CD4-positive, alpha-beta T cell (primary cell): ENCODE measurements at regions of chr14 and their contacts with region 1.

Region 1: DNA sequence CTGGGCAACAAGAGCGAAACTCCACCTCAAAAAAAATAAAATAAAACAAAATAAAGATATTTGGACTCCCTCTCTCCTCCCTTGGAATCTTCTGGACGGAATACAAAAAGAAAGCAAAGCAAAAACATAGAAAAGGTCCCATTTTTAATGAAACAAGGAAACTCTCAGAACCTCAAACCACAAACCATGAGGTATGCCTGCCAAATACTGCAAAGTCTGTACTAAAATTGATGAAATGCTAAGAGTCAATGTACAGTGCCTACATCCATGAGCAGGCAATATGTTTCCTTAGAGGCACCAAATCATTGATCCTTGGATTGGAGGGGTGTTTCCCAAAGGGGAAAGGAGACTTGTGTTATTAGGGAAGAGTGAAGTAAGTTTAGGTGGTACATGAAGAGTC is 8.2 kb upstream of the RPS6KA5 start:
- DNase-seq: peak in 3 of 14 experiments; percentile 21 to 65 (median 36)
- ATAC-seq: peak; percentile 24
- H3K4me3 ChIP-seq: no peak overlapping the region
- H3K4me3 Mint-ChIP-seq: peak overlapping the region; percentile 83
- H3K27ac ChIP-seq: no peak overlapping the region
- H3K27ac Mint-ChIP-seq: peak overlapping the region; percentile 68
- H3K4me1 ChIP-seq: peaks cover 62% of the 10 kb centered on the region
- H3K4me1 Mint-ChIP-seq: peaks cover 67% of the 10 kb centered on the region
- H3K27me3 ChIP-seq: no peaks in the 10 kb centered on the region
- H3K27me3 Mint-ChIP-seq: no peaks in the 10 kb centered on the region
- CTCF ChIP-seq: no peak

Region 2: GRCh38 chr14:90409209-90409730 is 659.4 kb before region 1 on chr14:
- CTCF ChIA-PET with region 1: no interaction called
- POLR2A ChIA-PET with region 1: no interaction called
- intact Hi-C with region 1: no loop called
- DNase-seq: no peak
- ATAC-seq: no peak
- H3K4me3 ChIP-seq: no peak overlapping the region
- H3K4me3 Mint-ChIP-seq: no peak overlapping the region
- H3K27ac ChIP-seq: no peak overlapping the region
- H3K27ac Mint-ChIP-seq: peak overlapping the region; percentile 73
- H3K4me1 ChIP-seq: peaks cover 3% of the 10 kb centered on the region
- H3K4me1 Mint-ChIP-seq: peaks cover 38% of the 10 kb centered on the region
- H3K27me3 ChIP-seq: no peaks in the 10 kb centered on the region
- H3K27me3 Mint-ChIP-seq: no peaks in the 10 kb centered on the region
- CTCF ChIP-seq: no peak

Region 3: GRCh38 chr14:90693413-90693812 is 375.2 kb before region 1 on chr14:
- CTCF ChIA-PET with region 1: no interaction called
- POLR2A ChIA-PET with region 1: no interaction called
- intact Hi-C with region 1: no loop called
- DNase-seq: no peak
- ATAC-seq: no peak
- H3K4me3 ChIP-seq: no peak overlapping the region
- H3K4me3 Mint-ChIP-seq: no peak overlapping the region
- H3K27ac ChIP-seq: no peak overlapping the region
- H3K27ac Mint-ChIP-seq: no peak overlapping the region
- H3K4me1 ChIP-seq: peaks cover 6% of the 10 kb centered on the region
- H3K4me1 Mint-ChIP-seq: no peaks in the 10 kb centered on the region
- H3K27me3 ChIP-seq: no peaks in the 10 kb centered on the region
- H3K27me3 Mint-ChIP-seq: no peaks in the 10 kb centered on the region
- CTCF ChIP-seq: no peak

Region 4: GRCh38 chr14:91021991-91022621 is 46.5 kb before region 1 on chr14:
- CTCF ChIA-PET with region 1: no interaction called
- POLR2A ChIA-PET with region 1: no interaction called
- intact Hi-C with region 1: no loop called
- DNase-seq: peak in 1 of 14 experiments; percentile 39
- ATAC-seq: no peak
- H3K4me3 ChIP-seq: peak overlapping the region; percentile 53
- H3K4me3 Mint-ChIP-seq: peak overlapping the region; percentile 85
- H3K27ac ChIP-seq: peak overlapping the region; percentile 59 to 82
- H3K27ac Mint-ChIP-seq: peak overlapping the region; percentile 59
- H3K4me1 ChIP-seq: peaks cover 18% of the 10 kb centered on the region
- H3K4me1 Mint-ChIP-seq: peaks cover 74% of the 10 kb centered on the region
- H3K27me3 ChIP-seq: no peaks in the 10 kb centered on the region
- H3K27me3 Mint-ChIP-seq: no peaks in the 10 kb centered on the region
- CTCF ChIP-seq: no peak

Region 5: DNA sequence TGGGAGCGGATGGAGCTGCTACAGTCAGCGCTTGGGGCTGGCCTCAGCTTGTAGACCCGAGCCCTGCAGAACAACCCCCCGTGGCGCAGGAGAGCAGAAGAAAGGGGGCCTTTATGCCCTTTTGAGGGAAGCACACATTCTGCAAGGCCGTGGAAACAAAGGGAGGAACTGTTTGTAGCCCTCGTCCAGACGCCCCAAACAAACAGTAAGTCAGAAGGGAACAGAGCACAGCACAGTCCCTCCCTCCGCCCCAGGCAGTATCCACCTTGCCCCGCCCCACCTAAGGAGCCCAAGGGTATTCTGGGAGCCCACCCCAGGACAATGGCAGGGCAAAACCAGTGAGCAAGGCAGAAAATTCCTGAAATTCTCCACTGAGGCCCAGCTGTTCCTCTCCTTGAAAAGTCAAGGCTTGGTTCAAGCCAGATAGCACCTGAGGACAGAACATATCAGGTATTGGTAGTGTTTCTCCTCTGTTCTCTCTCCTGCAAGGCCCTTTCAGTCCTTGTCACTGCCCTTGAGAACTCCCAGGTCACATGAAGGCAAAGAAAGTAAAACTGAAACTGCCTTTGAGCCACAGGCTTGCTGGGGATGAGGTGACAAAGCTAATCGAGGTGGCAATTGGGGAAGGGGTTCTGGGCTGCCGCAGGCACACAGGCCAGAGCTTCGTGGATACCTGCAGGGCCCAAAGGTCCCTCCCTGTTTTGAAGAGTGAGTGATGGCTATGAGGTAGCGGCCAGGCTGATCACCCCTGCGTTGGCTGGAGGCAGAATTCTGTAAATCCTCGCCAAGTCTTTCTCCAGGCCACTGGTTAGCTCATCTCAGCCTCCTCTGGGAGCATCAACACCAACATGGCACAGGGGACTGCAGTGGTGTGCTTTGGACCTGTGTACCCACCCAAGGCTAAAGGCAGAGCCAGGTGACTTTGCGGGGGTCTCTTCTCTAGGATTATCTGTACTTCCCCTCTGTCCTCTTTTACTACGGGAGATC is 45.7 kb after region 1 on chr14:
- CTCF ChIA-PET with region 1: no interaction called
- POLR2A ChIA-PET with region 1: interaction called, 181 read pairs
- intact Hi-C with region 1: no loop called
- DNase-seq: peak; percentile 30 to 89 (median 54)
- ATAC-seq: peak; percentile 77
- H3K4me3 ChIP-seq: peak overlapping the region; percentile 62
- H3K4me3 Mint-ChIP-seq: peak overlapping the region; percentile 92
- H3K27ac ChIP-seq: peak overlapping the region; percentile 83 to 88
- H3K27ac Mint-ChIP-seq: peak overlapping the region; percentile 91
- H3K4me1 ChIP-seq: peaks cover 65% of the 10 kb centered on the region
- H3K4me1 Mint-ChIP-seq: peaks cover 74% of the 10 kb centered on the region
- H3K27me3 ChIP-seq: no peaks in the 10 kb centered on the region
- H3K27me3 Mint-ChIP-seq: no peaks in the 10 kb centered on the region
- CTCF ChIP-seq: no peak